IMR-90 (cell line): ENCODE measurements at regions of chr20 and their contacts with region 1.

Region 1: DNA sequence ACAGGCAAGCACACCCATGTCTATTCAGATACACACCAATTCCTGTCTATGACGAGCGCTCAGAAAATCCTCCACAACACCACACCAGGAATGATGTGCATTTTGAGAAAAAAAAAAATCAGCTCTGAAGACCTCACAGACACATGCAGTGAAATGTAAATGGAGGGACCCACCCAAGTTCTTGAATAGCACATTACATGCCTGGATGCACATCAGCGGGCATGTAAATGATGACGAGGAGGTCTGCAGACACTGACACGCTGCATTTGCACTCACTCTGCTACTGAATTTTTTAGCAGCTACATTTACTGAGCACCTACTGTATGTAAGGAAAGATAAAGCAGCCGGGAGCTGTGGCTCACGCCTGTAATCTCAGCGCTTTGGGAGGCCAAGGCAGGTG is 14.7 kb downstream of the NRSN2 start:
- DNase-seq: no peak
- ATAC-seq: no peak
- H3K4me3 ChIP-seq: no peak overlapping the region
- H3K27ac ChIP-seq: no peak overlapping the region
- H3K4me1 ChIP-seq: peaks cover 26% of the 10 kb centered on the region
- H3K27me3 ChIP-seq: no peaks in the 10 kb centered on the region
- CTCF ChIP-seq: no peak
- POLR2A ChIP-seq: no peak
- RAD21 ChIP-seq: no peak

Region 2: DNA sequence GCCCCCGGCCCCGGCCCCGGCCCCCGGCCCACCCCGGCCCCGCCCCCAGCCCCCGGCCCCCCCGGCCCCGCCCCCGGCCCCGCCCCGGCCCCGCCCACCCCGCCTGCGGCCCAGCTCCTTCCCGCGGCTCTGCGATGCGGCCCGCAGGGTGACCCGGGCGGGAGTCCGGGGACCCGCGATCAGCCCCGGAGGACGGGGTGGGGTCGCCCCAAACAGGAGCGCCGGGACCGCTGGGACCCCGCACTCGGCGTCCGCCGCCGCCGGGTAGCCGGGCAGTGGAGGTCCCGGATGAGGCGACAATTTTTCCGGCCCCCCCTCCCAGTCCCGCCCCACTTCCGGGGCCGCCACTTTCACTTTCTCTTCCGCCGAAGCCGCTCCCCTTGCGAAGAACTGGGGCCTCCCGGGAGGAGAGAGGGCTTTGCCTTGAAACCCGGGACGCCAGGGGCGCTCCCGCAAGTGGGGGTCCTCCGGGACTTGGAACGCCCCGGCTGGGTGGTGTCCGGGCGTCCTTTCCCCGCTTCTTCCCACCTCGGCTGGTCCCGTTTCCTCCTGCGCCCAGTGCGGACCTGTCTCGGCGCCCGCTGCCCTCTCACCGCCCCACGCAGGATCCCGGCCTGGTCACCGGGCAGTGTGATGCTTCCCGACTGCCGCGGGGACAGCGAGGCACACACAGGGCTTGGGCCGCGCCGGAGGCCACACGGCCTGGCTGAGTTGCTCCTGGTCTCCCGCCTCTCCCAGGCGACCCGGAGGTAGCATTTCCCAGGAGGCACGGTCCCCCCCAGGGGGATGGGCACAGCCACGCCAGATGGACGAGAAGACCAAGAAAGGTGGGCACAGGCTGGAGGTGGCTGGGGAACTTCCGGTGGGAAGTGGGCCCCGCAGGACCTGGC is 46.6 kb after region 1 on chr20 and contains the start of gene RBCK1:
- CTCF ChIA-PET with region 1: no interaction called
- POLR2A ChIA-PET with region 1: no interaction called
- dilution Hi-C with region 1: no loop called
- in situ Hi-C with region 1: no loop called
- intact Hi-C with region 1: loop called (anchors 2 kb)
- DNase-seq: peak; percentile 72
- ATAC-seq: peak; percentile 83
- H3K4me3 ChIP-seq: peak within 1 kb of the TSS; percentile 91
- H3K27ac ChIP-seq: peak within 1 kb of the TSS; percentile 91
- H3K4me1 ChIP-seq: peaks cover 14% of the 10 kb centered on the region
- H3K27me3 ChIP-seq: no peaks in the 10 kb centered on the region
- CTCF ChIP-seq: no peak
- POLR2A ChIP-seq: peak; percentile 86
- RAD21 ChIP-seq: no peak
- total RNA-seq, gene RBCK1: 29.2 and 29.9 TPM in 2 replicates

Region 3: GRCh38 chr20:688809-689212 is 327.2 kb after region 1 on chr20:
- CTCF ChIA-PET with region 1: no interaction called
- POLR2A ChIA-PET with region 1: no interaction called
- dilution Hi-C with region 1: no loop called
- in situ Hi-C with region 1: no loop called
- intact Hi-C with region 1: no loop called
- DNase-seq: peak; percentile 2
- ATAC-seq: no peak; the same call in 1 of the 2 replicates
- H3K4me3 ChIP-seq: no peak overlapping the region
- H3K27ac ChIP-seq: no peak overlapping the region
- H3K4me1 ChIP-seq: no peaks in the 10 kb centered on the region
- H3K27me3 ChIP-seq: peaks cover 12% of the 10 kb centered on the region
- CTCF ChIP-seq: no peak
- POLR2A ChIP-seq: no peak
- RAD21 ChIP-seq: no peak